ENCODE measurements at regions of chr1 and their contacts with region 1.

Region 1: GRCh38 chr1:87131809-87132283 is 196.8 kb upstream of the LMO4 start:
- DNase-seq: peak; percentile 80
- H3K4me3 ChIP-seq: peak overlapping the region; percentile 22
- H3K27ac ChIP-seq: no peak overlapping the region
- H3K4me1 ChIP-seq: no peaks in the 10 kb centered on the region
- H3K27me3 ChIP-seq: no peaks in the 10 kb centered on the region
- CTCF ChIP-seq: peak; percentile 85

Region 2: GRCh38 chr1:87279966-87280535 is 148.2 kb after region 1 on chr1:
- intact Hi-C with region 1: loop called (anchors 10 kb)
- DNase-seq: no peak
- H3K4me3 ChIP-seq: no peak overlapping the region
- H3K27ac ChIP-seq: no peak overlapping the region
- H3K4me1 ChIP-seq: no peaks in the 10 kb centered on the region
- H3K27me3 ChIP-seq: no peaks in the 10 kb centered on the region
- CTCF ChIP-seq: no peak

Region 3: GRCh38 chr1:87402241-87403002 is 270.6 kb after region 1 on chr1:
- intact Hi-C with region 1: no loop called
- DNase-seq: no peak
- H3K4me3 ChIP-seq: no peak overlapping the region
- H3K27ac ChIP-seq: no peak overlapping the region
- H3K4me1 ChIP-seq: no peaks in the 10 kb centered on the region
- H3K27me3 ChIP-seq: no peaks in the 10 kb centered on the region
- CTCF ChIP-seq: no peak

Region 4: GRCh38 chr1:87953732-87954344 is 822.0 kb after region 1 on chr1:
- intact Hi-C with region 1: loop called (anchors 10 kb)
- DNase-seq: peak; percentile 73
- H3K4me3 ChIP-seq: no peak overlapping the region
- H3K27ac ChIP-seq: no peak overlapping the region
- H3K4me1 ChIP-seq: no peaks in the 10 kb centered on the region
- H3K27me3 ChIP-seq: no peaks in the 10 kb centered on the region
- CTCF ChIP-seq: peak; percentile 79

Measured in colonic mucosa (tissue), 4 donors.